Right ventricle myocardium superior (tissue), 1 donor: ENCODE measurements at regions of chr19 and their contacts with region 1.

Region 1: GRCh38 chr19:44304659-44305193 is at the start of gene ZNF235:
- DNase-seq: peak; percentile 92
- ATAC-seq: peak; percentile 100
- total RNA-seq, gene ZNF235: 3.3 TPM

Region 2: DNA sequence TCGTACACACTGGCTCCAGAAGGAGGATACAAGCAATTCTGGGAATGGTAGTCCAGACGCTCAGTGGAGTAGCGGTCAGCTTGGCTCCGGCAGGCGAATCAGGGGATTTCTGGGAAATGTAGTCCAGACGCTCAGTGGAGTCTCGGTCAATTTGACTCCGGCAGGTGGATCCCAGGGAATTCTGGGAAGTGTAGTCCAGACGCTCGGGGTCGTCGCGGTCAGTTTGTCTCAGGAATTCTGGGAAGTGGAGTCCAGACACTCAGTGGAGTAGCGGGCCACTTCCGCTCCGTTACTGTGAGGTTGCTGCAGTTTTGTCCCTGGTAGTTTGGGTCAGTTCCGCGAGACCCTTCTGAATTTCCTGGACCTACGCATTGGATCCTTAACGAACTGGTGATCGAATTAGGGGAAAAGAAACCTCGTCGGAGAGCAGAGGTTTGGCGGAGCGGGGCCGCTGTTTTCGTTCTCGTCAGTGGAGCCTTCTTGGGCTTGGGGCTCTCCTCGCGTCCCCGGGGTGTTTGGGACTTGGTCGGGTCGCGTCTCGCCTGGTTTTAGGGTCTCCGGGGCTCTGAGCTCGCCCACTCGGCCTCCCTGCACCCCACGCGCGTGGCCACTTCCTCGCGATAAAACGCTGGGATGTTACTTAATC is 191.5 kb before region 1 on chr19 and contains the start of gene ZNF225:
- intact Hi-C with region 1: loop called (anchors 10 kb)
- DNase-seq: peak; percentile 95
- ATAC-seq: peak; percentile 98
- total RNA-seq, gene ZNF225: 3.0 TPM

Region 3: GRCh38 chr19:44164327-44164672 is 140.4 kb before region 1 on chr19:
- intact Hi-C with region 1: no loop called
- DNase-seq: no peak
- ATAC-seq: no peak

Region 4: DNA sequence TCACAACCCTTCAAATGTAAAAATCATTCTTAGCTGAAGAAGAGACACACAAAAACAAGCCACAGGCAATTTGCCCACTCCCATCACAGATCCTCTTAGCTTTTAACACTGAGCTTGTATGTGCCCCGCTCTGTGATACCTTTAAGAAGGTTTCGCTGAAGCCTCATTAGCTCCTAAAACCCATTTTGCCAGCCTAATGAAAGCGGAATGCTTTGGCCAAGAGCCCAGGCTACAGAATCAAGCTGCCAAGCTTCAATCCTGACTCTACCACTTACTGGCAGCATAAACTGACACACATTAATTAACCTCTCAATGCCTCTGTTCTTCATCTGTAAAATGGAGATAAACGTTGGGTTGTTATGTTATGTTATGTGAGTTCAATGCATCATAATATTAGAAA is 41.2 kb after region 1 on chr19:
- intact Hi-C with region 1: loop called (anchors 5 kb)
- DNase-seq: no peak
- ATAC-seq: peak; percentile 82